ENCODE measurements at regions of chr4 and their contacts with region 1.

Region 1: GRCh38 chr4:78439328-78439727 is 112.2 kb upstream of the ANXA3 start:
- DNase-seq: no peak
- H3K27ac ChIP-seq: no peak overlapping the region
- CTCF ChIP-seq: no peak

Region 2: DNA sequence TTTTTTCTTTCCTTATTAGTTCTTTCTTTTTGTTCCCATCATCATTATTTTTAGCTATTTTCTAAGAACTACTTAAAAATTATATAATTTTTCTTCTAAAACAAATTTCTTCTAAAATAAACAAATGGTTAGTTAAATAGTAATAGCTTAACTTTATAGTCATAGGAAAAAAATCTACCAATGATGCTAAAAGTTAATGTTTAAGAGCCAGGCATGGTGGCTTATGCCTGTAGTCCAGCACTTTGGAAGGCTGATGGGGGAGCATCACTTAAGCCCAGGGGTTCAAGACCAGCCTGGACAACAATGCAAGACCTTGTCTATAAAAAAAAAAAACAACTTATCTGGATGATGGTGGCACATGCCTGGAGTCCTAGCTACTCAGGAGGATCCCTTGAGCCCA is 14.9 kb before region 1 on chr4:
- CTCF ChIA-PET with region 1: interaction called, 11 read pairs
- POLR2A ChIA-PET with region 1: no interaction called
- DNase-seq: no peak
- H3K27ac ChIP-seq: no peak overlapping the region
- CTCF ChIP-seq: no peak